ENCODE measurements at regions of chr6 and their contacts with region 1.

Region 1: GRCh38 chr6:150891888-150892485 is 26.5 kb downstream of the MTHFD1L start:
- DNase-seq: peak; percentile 90
- H3K4me3 ChIP-seq: no peak overlapping the region
- H3K27ac ChIP-seq: peak overlapping the region; percentile 8
- H3K4me1 ChIP-seq: peaks cover 2% of the 10 kb centered on the region
- H3K27me3 ChIP-seq: no peaks in the 10 kb centered on the region
- CTCF ChIP-seq: peak; percentile 78 to 82
- POLR2A ChIP-seq: no peak

Region 2: GRCh38 chr6:150606168-150606591 is 285.8 kb before region 1 on chr6:
- CTCF ChIA-PET with region 1: no interaction called
- POLR2A ChIA-PET with region 1: no interaction called
- dilution Hi-C with region 1: no loop called
- intact Hi-C with region 1: no loop called
- DNase-seq: no peak
- H3K4me3 ChIP-seq: no peak overlapping the region
- H3K27ac ChIP-seq: no peak overlapping the region
- H3K4me1 ChIP-seq: peaks cover 4% of the 10 kb centered on the region
- H3K27me3 ChIP-seq: peaks cover 8 to 10% of the 10 kb centered on the region in 2 experiments
- CTCF ChIP-seq: no peak
- POLR2A ChIP-seq: no peak

Region 3: GRCh38 chr6:150813319-150813992 is 78.5 kb before region 1 on chr6:
- CTCF ChIA-PET with region 1: interaction called, 35 read pairs
- POLR2A ChIA-PET with region 1: no interaction called
- dilution Hi-C with region 1: no loop called
- intact Hi-C with region 1: no loop called
- DNase-seq: no peak
- H3K4me3 ChIP-seq: no peak overlapping the region
- H3K27ac ChIP-seq: peak overlapping the region; percentile 12
- H3K4me1 ChIP-seq: peaks cover 10% of the 10 kb centered on the region
- H3K27me3 ChIP-seq: no peaks in the 10 kb centered on the region
- CTCF ChIP-seq: no peak
- POLR2A ChIP-seq: no peak

Region 4: DNA sequence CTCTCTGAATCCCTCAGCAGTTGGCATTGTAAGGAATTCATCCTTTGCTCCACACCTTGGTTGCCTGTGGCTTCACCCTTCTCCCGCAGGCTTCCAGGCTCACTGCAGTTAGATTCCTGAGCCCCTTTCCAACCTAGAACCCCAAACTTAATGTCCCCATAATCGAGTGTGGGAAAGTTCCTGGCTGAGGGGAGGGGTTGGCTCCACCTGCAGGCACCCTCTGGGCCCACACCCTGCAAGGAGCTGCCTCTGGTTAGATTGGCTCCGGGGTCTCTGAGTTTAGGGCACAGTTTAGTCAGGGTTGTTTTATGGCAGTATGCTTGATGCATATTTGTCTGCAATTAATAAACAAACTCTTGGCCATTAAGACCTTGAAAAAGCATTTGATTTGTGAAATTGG is 36.9 kb after region 1 on chr6:
- CTCF ChIA-PET with region 1: interaction called, 12 read pairs
- POLR2A ChIA-PET with region 1: no interaction called
- dilution Hi-C with region 1: no loop called
- intact Hi-C with region 1: no loop called
- DNase-seq: no peak
- H3K4me3 ChIP-seq: no peak overlapping the region
- H3K27ac ChIP-seq: no peak overlapping the region
- H3K4me1 ChIP-seq: peaks cover 7% of the 10 kb centered on the region
- H3K27me3 ChIP-seq: no peaks in the 10 kb centered on the region
- CTCF ChIP-seq: peak; percentile 14 to 28
- POLR2A ChIP-seq: no peak

Region 5: GRCh38 chr6:151240036-151240685 is 348.2 kb after region 1 on chr6:
- CTCF ChIA-PET with region 1: interaction called, 11 read pairs
- POLR2A ChIA-PET with region 1: no interaction called
- dilution Hi-C with region 1: no loop called
- intact Hi-C with region 1: loop called (anchors 2 kb)
- DNase-seq: peak; percentile 73
- H3K4me3 ChIP-seq: peak overlapping the region; percentile 64 to 96 (median 69)
- H3K27ac ChIP-seq: peak overlapping the region; percentile 59
- H3K4me1 ChIP-seq: peaks cover 30% of the 10 kb centered on the region
- H3K27me3 ChIP-seq: no peaks in the 10 kb centered on the region
- CTCF ChIP-seq: peak in 1 of 2 donors; percentile 17
- POLR2A ChIP-seq: peak; percentile 79

Region 6: DNA sequence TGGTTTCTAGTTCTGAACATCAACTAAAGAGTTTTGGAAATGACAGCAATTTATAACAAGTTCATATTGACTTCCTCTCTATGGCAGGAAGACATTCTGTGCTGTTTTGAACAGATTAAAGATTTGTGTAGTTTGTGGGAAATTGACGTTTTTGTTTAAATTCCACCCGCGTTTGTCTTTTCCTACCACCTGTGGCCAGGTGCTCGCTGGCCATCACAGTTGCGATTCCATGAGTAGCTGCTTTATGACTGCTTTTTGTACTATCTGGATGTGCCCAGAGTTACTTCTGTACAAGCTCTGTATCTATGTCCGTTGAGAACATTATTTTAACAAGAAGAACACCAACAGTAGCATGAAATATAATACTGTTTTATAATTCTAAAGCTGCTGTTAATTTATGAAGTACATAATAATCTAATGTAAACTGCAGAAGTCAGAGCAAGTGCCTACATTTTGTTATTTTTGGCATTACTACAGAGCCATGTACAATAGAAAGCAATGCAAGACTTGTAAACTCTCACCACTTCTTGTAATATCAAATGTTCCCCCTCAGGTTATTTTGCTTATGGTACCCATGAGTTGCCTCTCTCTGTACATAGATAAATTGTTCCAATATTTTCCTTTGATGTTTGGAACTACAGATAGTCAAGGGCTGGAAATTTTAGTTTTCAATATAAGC is 465.9 kb after region 1 on chr6:
- CTCF ChIA-PET with region 1: interaction called, 16 read pairs
- POLR2A ChIA-PET with region 1: no interaction called
- dilution Hi-C with region 1: no loop called
- intact Hi-C with region 1: no loop called
- DNase-seq: peak; percentile 57
- H3K4me3 ChIP-seq: no peak overlapping the region
- H3K27ac ChIP-seq: no peak overlapping the region
- H3K4me1 ChIP-seq: peaks cover 15% of the 10 kb centered on the region
- H3K27me3 ChIP-seq: no peaks in the 10 kb centered on the region
- CTCF ChIP-seq: no peak
- POLR2A ChIP-seq: no peak

Region 7: GRCh38 chr6:151403919-151404308 is 511.9 kb after region 1 on chr6:
- CTCF ChIA-PET with region 1: interaction called, 20 read pairs
- POLR2A ChIA-PET with region 1: no interaction called
- dilution Hi-C with region 1: no loop called
- intact Hi-C with region 1: no loop called
- DNase-seq: no peak
- H3K4me3 ChIP-seq: no peak overlapping the region
- H3K27ac ChIP-seq: no peak overlapping the region
- H3K4me1 ChIP-seq: no peaks in the 10 kb centered on the region
- H3K27me3 ChIP-seq: no peaks in the 10 kb centered on the region
- CTCF ChIP-seq: no peak
- POLR2A ChIP-seq: no peak